ENCODE measurements at regions of chr6 and their contacts with region 1.

Region 1: DNA sequence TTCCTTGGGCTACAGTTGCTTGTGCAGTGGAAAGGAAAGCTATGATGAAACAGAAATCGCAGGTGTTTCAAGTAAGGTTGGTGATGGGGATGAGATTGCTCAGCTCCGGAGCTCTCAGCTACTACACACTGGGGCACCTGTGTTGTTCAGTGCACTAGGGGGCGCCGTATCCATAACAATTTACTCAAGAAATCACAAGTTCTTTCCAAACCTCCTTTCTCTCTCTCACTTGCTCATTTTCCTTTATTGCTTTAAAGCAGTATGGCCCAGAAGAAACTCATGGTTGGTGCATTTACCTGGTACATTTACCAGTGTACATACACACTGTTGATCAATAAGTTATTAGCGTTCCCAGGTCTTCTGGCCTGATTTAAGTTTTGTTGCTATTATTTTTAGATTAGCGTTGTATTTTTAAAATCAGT is 235.2 kb upstream of the TAB2 start:
- DNase-seq: peak; percentile 59 to 84 (median 76)
- ATAC-seq: peak; percentile 97
- H3K4me3 ChIP-seq: no peak overlapping the region
- H3K4me3 Mint-ChIP-seq: peak overlapping the region in 2 of 10 donors; percentile 18 to 72
- H3K27ac ChIP-seq: no peak overlapping the region
- H3K27ac Mint-ChIP-seq: peak overlapping the region in 5 of 9 donors; percentile 4 to 90 (median 52)
- H3K4me1 ChIP-seq: peaks cover 16 to 25% of the 10 kb centered on the region in 2 donors
- H3K4me1 Mint-ChIP-seq: peaks cover 10 to 88% (median 39%) of the 10 kb centered on the region in 7 donors
- H3K27me3 ChIP-seq: no peaks in the 10 kb centered on the region
- H3K27me3 Mint-ChIP-seq: no peaks in the 10 kb centered on the region

Region 2: GRCh38 chr6:149129371-149130077 is 47.2 kb after region 1 on chr6:
- CTCF ChIA-PET with region 1: interaction called, 3 read pairs
- POLR2A ChIA-PET with region 1: no interaction called
- intact Hi-C with region 1: loop called in 1 of 2 experiments (anchors 2 kb)
- DNase-seq: no peak
- ATAC-seq: peak; percentile 62
- H3K4me3 ChIP-seq: no peak overlapping the region
- H3K4me3 Mint-ChIP-seq: peak overlapping the region in 6 of 10 donors; percentile 2 to 66 (median 30)
- H3K27ac ChIP-seq: peak overlapping the region; percentile 45
- H3K27ac Mint-ChIP-seq: peak overlapping the region; percentile 76 to 99 (median 91)
- H3K4me1 ChIP-seq: peaks cover 28 to 47% of the 10 kb centered on the region in 2 donors
- H3K4me1 Mint-ChIP-seq: peaks cover 40 to 83% (median 79%) of the 10 kb centered on the region in 7 donors
- H3K27me3 ChIP-seq: no peaks in the 10 kb centered on the region
- H3K27me3 Mint-ChIP-seq: no peaks in the 10 kb centered on the region

Region 3: DNA sequence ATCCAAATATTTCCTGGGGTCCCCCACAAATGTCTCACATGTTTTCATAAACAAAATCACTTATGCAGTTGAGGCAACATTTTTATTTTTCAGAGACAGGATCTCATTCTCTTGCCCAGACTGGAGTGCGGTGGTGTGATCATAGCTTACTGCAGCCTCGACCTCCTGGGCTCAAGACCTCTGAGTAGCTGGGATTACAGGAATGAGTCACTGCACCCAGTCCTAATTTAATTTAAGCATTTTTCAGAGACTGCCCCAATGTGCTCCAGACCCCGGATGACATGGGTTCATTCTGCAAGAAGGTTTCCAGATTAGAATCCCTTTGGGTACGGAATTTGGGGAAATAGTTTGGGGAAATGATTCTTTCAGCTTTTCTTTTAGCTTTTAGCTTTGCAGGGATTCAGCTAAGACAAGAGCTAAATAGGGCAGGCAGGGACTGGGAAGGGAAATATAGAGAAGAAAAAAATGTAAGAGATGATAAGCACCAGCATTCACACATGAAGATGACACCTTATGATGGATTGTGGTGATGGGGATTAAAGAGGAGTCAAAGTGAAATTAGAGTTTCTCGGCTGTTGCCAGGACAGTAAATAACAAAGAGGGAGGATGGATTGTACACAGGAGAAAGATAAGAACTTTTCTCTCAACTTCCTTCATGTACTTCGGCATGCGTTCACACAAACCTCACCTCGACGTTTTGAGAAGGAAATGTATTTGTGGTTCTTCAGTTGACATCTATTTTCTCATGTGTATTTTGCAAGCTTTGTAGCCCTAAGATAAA is 65.8 kb after region 1 on chr6:
- CTCF ChIA-PET with region 1: no interaction called
- POLR2A ChIA-PET with region 1: interaction called, 3 read pairs
- intact Hi-C with region 1: loop called in 1 of 2 experiments (anchors 2 kb)
- DNase-seq: peak in 7 of 9 donors; percentile 31 to 82 (median 56)
- ATAC-seq: peak; percentile 91
- H3K4me3 ChIP-seq: no peak overlapping the region
- H3K4me3 Mint-ChIP-seq: peak overlapping the region in 7 of 10 donors; percentile 7 to 69 (median 54)
- H3K27ac ChIP-seq: peak overlapping the region; percentile 64
- H3K27ac Mint-ChIP-seq: peak overlapping the region; percentile 80 to 97 (median 85)
- H3K4me1 ChIP-seq: peaks cover 26 to 29% of the 10 kb centered on the region in 2 donors
- H3K4me1 Mint-ChIP-seq: peaks cover 35 to 88% (median 55%) of the 10 kb centered on the region in 7 donors
- H3K27me3 ChIP-seq: no peaks in the 10 kb centered on the region
- H3K27me3 Mint-ChIP-seq: no peaks in the 10 kb centered on the region

Region 4: GRCh38 chr6:149264629-149265028 is 182.3 kb after region 1 on chr6:
- CTCF ChIA-PET with region 1: interaction called, 3 read pairs
- POLR2A ChIA-PET with region 1: no interaction called
- intact Hi-C with region 1: loop called in 1 of 2 experiments (anchors 1 kb)
- DNase-seq: peak in 8 of 9 donors; percentile 42 to 65 (median 50)
- ATAC-seq: peak; percentile 69
- H3K4me3 ChIP-seq: no peak overlapping the region
- H3K4me3 Mint-ChIP-seq: peak overlapping the region; percentile 29 to 76 (median 67)
- H3K27ac ChIP-seq: no peak overlapping the region
- H3K27ac Mint-ChIP-seq: peak overlapping the region; percentile 49 to 87 (median 74)
- H3K4me1 ChIP-seq: peaks cover 0 to 54% of the 10 kb centered on the region in 2 donors
- H3K4me1 Mint-ChIP-seq: peaks cover 33 to 59% (median 52%) of the 10 kb centered on the region in 7 donors
- H3K27me3 ChIP-seq: no peaks in the 10 kb centered on the region
- H3K27me3 Mint-ChIP-seq: no peaks in the 10 kb centered on the region

Region 5: DNA sequence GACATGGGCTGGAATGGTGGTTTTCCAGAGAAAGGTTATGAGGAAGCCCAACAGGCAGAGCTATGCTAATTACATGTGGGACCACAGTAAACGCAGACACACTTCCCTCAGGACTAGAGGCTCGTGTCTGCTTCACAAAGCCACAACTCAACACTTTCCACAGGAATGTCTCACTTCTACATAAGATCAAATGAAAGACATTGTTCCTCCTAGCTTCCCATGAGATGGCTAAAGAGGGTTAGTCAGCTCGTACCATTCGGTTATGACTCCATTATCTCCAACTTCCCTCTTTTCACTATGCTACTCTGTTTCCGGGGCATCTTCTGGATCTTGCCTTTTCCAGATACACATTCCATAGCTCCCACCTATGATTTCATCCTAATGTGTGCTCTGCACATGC is 431.6 kb after region 1 on chr6:
- CTCF ChIA-PET with region 1: interaction called, 13 read pairs
- POLR2A ChIA-PET with region 1: interaction called, 4 read pairs
- intact Hi-C with region 1: loop called (anchors 1 kb)
- DNase-seq: no peak
- ATAC-seq: peak; percentile 31
- H3K4me3 ChIP-seq: no peak overlapping the region
- H3K4me3 Mint-ChIP-seq: no peak overlapping the region
- H3K27ac ChIP-seq: no peak overlapping the region
- H3K27ac Mint-ChIP-seq: peak overlapping the region in 7 of 9 donors; percentile 42 to 72 (median 56)
- H3K4me1 ChIP-seq: peaks cover 13 to 16% of the 10 kb centered on the region in 2 donors
- H3K4me1 Mint-ChIP-seq: peaks cover 8 to 44% (median 43%) of the 10 kb centered on the region in 7 donors
- H3K27me3 ChIP-seq: no peaks in the 10 kb centered on the region
- H3K27me3 Mint-ChIP-seq: no peaks in the 10 kb centered on the region